ENCODE measurements at regions of chr10 and their contacts with region 1.

Region 1: GRCh38 chr10:61750929-61751471 is 88.3 kb downstream of the CABCOCO1 start:
- DNase-seq: peak in 7 of 10 donors; percentile 4 to 48 (median 34)
- H3K4me3 ChIP-seq: no peak overlapping the region
- H3K27ac ChIP-seq: no peak overlapping the region
- H3K27me3 ChIP-seq: no peaks in the 10 kb centered on the region
- CTCF ChIP-seq: peak; percentile 24 to 75 (median 57)

Region 2: DNA sequence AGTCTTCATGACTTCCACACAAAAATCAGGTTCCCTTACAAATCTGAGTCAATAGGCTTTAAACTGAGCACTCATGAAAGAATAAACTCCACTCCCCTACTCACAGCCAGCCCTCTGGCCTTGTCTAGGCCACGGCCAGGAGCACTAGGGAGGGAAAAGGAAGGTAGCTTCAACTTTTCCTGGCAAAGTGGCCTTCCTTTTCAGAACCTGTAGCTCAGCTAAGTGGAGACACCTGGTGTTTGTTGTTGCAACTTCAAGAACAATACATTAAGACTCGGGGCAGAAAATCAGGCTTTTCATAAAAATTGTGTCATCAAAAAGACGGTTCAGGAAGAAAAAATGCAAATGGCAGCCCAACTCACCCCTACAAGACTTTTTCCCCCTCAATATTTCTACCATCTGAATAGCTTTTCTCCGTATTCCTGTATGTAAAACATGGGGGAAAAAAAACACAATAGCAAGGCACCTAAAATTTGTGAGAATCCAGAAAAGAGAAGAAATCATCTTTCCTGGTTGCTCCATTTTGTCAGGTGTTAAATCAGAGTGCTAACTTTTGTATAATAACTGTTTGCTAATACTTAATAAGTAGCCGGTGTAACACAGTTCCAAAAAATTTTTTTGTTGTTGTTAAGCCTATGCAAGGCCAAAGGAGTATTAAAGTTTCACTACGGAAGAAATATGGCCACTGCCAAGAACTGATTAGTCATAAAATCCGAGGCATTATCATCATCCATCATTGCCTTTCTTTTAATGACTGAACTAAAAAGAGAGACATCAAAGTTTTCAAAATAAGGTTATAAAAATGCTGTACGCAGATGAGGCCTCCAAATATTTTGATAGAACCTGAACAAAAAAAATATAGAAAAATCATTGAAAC is 84.3 kb after region 1 on chr10:
- intact Hi-C with region 1: loop called in 1 of 2 experiments (anchors 5 kb)
- DNase-seq: no peak
- H3K4me3 ChIP-seq: no peak overlapping the region
- H3K27ac ChIP-seq: no peak overlapping the region
- H3K27me3 ChIP-seq: no peaks in the 10 kb centered on the region
- CTCF ChIP-seq: peak in 43 of 56 donors; percentile 9 to 60 (median 28)

Region 3: GRCh38 chr10:61847087-61847486 is 96.1 kb after region 1 on chr10:
- intact Hi-C with region 1: no loop called
- DNase-seq: no peak
- H3K4me3 ChIP-seq: no peak overlapping the region
- H3K27ac ChIP-seq: no peak overlapping the region
- H3K27me3 ChIP-seq: no peaks in the 10 kb centered on the region
- CTCF ChIP-seq: no peak

Region 4: GRCh38 chr10:61896854-61897661 is 146.1 kb after region 1 on chr10:
- intact Hi-C with region 1: loop called in 1 of 2 experiments (anchors 10 kb)
- DNase-seq: peak in 7 of 10 donors; percentile 26 to 59 (median 48)
- H3K4me3 ChIP-seq: peak overlapping the region; percentile 22 to 76 (median 58)
- H3K27ac ChIP-seq: peak overlapping the region in 47 of 59 donors; percentile 8 to 96 (median 61)
- H3K27me3 ChIP-seq: no peaks in the 10 kb centered on the region
- CTCF ChIP-seq: peak; percentile 34 to 80 (median 70)